ENCODE measurements at regions of chr6 and their contacts with region 1.

Region 1: DNA sequence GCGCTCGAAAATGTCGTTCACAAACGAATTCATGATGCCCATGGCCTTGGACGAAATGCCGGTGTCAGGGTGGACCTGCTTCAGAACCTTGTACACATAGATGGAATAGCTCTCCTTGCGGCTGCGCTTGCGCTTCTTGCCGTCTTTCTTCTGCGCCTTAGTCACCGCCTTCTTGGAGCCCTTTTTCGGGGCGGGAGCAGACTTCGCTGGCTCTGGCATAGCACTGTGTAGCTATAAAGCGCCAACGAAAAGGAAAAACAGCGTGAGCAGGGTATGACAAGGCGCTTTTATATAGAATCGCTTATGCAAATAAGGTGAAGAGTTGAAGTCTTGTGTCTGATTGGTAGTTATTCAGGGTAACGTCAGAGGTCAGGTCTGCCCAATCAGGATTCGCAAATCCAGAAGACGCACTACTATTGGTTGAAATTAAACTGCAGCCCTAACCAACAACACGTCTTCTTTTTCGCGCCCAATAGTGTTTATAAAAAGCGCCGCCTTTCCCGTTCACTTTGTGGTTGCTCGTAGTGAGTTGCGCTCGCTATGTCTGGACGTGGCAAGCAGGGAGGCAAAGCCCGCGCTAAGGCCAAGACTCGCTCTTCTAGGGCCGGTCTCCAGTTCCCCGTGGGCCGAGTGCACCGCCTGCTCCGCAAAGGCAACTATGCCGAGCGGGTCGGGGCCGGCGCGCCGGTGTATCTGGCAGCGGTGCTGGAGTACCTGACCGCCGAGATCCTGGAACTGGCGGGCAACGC is 114.8 kb upstream of the PRSS16 start:
- DNase-seq: peak; percentile 93
- CTCF ChIP-seq: no peak

Region 2: DNA sequence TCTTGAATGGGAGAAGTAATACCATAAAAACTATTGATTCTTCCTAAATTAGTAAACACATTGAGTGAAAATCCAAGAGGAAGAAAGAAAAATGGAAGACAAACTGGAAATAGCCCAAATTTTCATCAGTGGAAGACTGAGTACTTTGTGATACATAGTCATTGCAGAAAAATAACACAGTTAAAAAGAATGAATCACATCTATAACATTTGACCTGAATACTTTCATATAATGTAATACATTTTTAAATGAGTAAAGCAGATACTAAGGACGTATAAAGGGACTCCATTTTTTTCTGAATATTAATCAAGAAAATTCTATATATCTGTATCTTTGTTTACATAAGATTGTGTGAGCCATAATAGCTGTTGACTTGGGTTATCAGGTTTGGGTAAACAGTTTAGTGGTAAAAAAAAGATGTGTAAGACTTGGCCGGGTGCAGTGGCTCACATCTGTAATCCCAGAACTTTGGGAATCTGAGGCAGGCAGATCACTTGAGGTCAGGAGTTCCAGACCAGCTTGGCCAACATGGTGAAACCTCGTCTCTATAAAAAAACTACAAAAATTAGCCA is 1197.9 kb before region 1 on chr6:
- in situ Hi-C with region 1: no loop called
- DNase-seq: no peak
- CTCF ChIP-seq: no peak

Region 3: GRCh38 chr6:26031595-26032339 is 1100.9 kb before region 1 on chr6:
- in situ Hi-C with region 1: loop called (anchors 10 kb)
- DNase-seq: peak; percentile 87
- CTCF ChIP-seq: peak; percentile 21